ENCODE measurements at regions of chr1 and their contacts with region 1.

Region 1: DNA sequence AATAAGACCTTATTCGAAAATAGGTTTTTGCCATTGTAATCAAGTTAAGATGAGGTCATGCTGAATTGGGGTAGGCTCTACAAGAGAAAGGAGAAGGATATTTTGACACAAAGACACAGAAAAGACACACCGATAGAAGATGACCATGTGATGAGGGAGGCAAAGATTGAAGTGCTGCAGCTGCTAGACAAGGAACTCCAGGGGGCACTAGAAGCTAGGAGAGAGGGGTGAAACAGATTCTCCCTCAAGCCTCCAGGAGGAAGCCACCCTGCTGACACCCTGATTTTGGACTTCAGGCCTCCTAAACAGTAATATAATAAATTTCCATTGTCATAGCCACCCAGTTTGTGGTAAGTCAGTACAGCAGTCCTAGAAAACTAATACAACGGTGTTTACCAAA is 506.8 kb upstream of the CAMK1G start:
- DNase-seq: peak; percentile 67
- ATAC-seq: no peak
- H3K4me3 ChIP-seq: no peak overlapping the region
- H3K27ac ChIP-seq: no peak overlapping the region
- H3K4me1 ChIP-seq: peaks cover 43% of the 10 kb centered on the region
- H3K27me3 ChIP-seq: no peaks in the 10 kb centered on the region
- CTCF ChIP-seq: peak; percentile 86

Region 2: GRCh38 chr1:208919371-208919770 is 157.3 kb before region 1 on chr1:
- CTCF ChIA-PET with region 1: no interaction called
- POLR2A ChIA-PET with region 1: no interaction called
- intact Hi-C with region 1: loop called (anchors 1 kb)
- DNase-seq: peak; percentile 94
- ATAC-seq: peak; percentile 63
- H3K4me3 ChIP-seq: no peak overlapping the region
- H3K27ac ChIP-seq: peak overlapping the region; percentile 91
- H3K4me1 ChIP-seq: peaks cover 63% of the 10 kb centered on the region
- H3K27me3 ChIP-seq: no peaks in the 10 kb centered on the region
- CTCF ChIP-seq: no peak

Region 3: DNA sequence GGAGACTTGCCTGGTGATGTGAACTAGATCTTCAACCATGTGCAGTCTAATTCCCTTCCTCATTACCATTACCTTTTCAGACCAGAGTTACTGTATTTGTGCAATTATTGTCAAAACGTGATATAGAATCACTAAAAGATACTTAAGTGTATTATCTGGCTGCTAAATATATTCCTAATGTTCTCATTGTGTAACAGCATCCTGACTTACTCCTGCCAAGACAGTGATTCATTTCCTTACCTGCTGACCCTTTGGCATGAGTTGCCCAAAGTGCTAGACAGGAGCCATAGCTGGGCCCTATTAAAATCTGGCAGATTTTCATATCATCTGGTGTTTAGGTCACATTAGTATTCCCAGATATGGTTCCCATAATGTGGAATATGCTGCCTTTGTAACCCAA is 91.5 kb before region 1 on chr1:
- CTCF ChIA-PET with region 1: no interaction called
- POLR2A ChIA-PET with region 1: no interaction called
- intact Hi-C with region 1: no loop called
- DNase-seq: peak; percentile 88
- ATAC-seq: peak; percentile 72
- H3K4me3 ChIP-seq: no peak overlapping the region
- H3K27ac ChIP-seq: peak overlapping the region; percentile 56
- H3K4me1 ChIP-seq: peaks cover 43% of the 10 kb centered on the region
- H3K27me3 ChIP-seq: no peaks in the 10 kb centered on the region
- CTCF ChIP-seq: no peak

Region 4: GRCh38 chr1:209038735-209039134 is 38.0 kb before region 1 on chr1:
- CTCF ChIA-PET with region 1: no interaction called
- POLR2A ChIA-PET with region 1: no interaction called
- intact Hi-C with region 1: loop called (anchors 1 kb)
- DNase-seq: peak; percentile 49
- ATAC-seq: no peak; the same call in 1 of the 2 replicates
- H3K4me3 ChIP-seq: peak overlapping the region; percentile 8; the same call in 1 of the 2 replicates
- H3K27ac ChIP-seq: peak overlapping the region; percentile 86
- H3K4me1 ChIP-seq: peaks cover 35% of the 10 kb centered on the region
- H3K27me3 ChIP-seq: no peaks in the 10 kb centered on the region
- CTCF ChIP-seq: no peak

Region 5: GRCh38 chr1:209095627-209096595 is 19.2 kb after region 1 on chr1:
- CTCF ChIA-PET with region 1: no interaction called
- POLR2A ChIA-PET with region 1: interaction called, 4 read pairs
- intact Hi-C with region 1: loop called (anchors 1 kb)
- DNase-seq: peak; percentile 99
- ATAC-seq: peak; percentile 99
- H3K4me3 ChIP-seq: 0 out of 2 replicates have a peak overlapping the region, but pooled peaks have one; percentile 4
- H3K27ac ChIP-seq: peak overlapping the region; percentile 59
- H3K4me1 ChIP-seq: peaks cover 29% of the 10 kb centered on the region
- H3K27me3 ChIP-seq: no peaks in the 10 kb centered on the region
- CTCF ChIP-seq: no peak

Region 6: DNA sequence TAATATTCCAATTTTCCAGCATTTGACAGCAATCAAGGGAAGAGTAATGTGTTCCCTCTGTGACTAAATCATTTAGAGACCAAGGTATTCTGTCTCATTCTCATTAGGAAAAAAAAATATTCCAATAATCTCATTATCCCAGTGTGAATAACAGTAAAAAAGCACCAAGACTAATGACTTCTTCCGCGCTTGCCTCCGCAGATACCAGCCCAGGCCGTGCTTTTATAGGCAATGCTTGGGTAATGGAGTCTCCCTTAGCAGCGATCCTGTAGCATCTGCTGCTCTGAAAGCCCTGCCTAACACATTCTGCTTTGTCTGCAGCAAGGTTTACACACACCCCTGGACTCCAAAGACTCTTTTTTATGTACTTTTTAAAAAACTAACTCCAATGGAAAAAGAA is 36.8 kb after region 1 on chr1:
- CTCF ChIA-PET with region 1: no interaction called
- POLR2A ChIA-PET with region 1: no interaction called
- intact Hi-C with region 1: no loop called
- DNase-seq: no peak
- ATAC-seq: no peak
- H3K4me3 ChIP-seq: no peak overlapping the region
- H3K27ac ChIP-seq: no peak overlapping the region
- H3K4me1 ChIP-seq: no peaks in the 10 kb centered on the region
- H3K27me3 ChIP-seq: no peaks in the 10 kb centered on the region
- CTCF ChIP-seq: no peak

Region 7: GRCh38 chr1:209190591-209191261 is 114.0 kb after region 1 on chr1:
- CTCF ChIA-PET with region 1: interaction called, 3 read pairs
- POLR2A ChIA-PET with region 1: no interaction called
- intact Hi-C with region 1: loop called (anchors 1 kb)
- DNase-seq: peak; percentile 86
- ATAC-seq: peak; percentile 90
- H3K4me3 ChIP-seq: no peak overlapping the region
- H3K27ac ChIP-seq: no peak overlapping the region
- H3K4me1 ChIP-seq: peaks cover 4% of the 10 kb centered on the region; the same call in 1 of the 2 replicates
- H3K27me3 ChIP-seq: no peaks in the 10 kb centered on the region
- CTCF ChIP-seq: peak; percentile 97

Region 8: GRCh38 chr1:209248649-209249279 is 172.1 kb after region 1 on chr1:
- CTCF ChIA-PET with region 1: no interaction called
- POLR2A ChIA-PET with region 1: no interaction called
- intact Hi-C with region 1: loop called (anchors 5 kb)
- DNase-seq: peak; percentile 97
- ATAC-seq: peak; percentile 58
- H3K4me3 ChIP-seq: no peak overlapping the region
- H3K27ac ChIP-seq: no peak overlapping the region
- H3K4me1 ChIP-seq: peaks cover 44% of the 10 kb centered on the region
- H3K27me3 ChIP-seq: no peaks in the 10 kb centered on the region
- CTCF ChIP-seq: peak; percentile 98